Tibial artery (tissue), 4 donors: ENCODE measurements at regions of chr5 and their contacts with region 1.

Region 1: DNA sequence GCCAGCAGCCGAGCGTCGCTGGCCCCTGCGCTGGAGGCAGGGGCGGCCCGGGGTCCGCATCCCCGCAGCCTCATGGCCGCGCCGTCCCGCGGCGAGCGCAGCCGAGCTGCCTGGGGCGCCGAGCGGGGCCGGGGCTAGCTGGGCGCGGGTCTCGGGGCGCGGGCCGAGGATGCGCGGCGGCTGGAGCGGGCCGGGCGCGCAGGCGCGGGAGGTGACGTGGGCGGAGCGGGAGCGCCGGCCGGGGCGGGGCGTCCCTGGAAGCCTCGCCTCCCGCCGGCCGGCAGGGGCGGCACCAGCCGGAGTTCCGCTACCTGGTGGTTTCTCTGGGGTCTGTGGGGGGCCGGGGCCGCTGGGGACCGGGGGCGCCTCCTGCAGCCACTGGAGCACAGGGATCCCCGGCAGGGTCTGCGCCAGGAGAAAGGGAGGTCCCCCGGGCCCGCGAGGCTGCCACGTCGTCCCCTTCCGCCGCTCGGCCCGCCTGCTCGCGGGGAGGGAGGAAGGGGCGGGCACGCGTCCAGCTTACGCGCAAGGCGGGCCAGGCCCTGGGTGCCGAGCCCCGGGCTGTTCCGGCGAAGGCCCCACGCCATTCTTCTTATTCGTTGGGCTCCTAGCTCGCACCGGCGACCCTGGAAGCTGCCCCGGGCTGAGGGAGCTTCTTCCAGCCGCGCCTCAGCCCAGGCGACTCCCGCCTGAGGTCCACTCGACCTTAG is at the start of gene LPCAT1:
- DNase-seq: peak; percentile 54 to 88
- H3K4me3 ChIP-seq: peak within 1 kb of the TSS; percentile 65 to 80
- H3K27ac ChIP-seq: peak within 1 kb of the TSS; percentile 90 to 91
- H3K4me1 ChIP-seq: peaks cover 0 to 26% (median 21%) of the 10 kb centered on the region in 4 donors
- H3K27me3 ChIP-seq: no peaks in the 10 kb centered on the region
- CTCF ChIP-seq: peak; percentile 17 to 26

Region 2: DNA sequence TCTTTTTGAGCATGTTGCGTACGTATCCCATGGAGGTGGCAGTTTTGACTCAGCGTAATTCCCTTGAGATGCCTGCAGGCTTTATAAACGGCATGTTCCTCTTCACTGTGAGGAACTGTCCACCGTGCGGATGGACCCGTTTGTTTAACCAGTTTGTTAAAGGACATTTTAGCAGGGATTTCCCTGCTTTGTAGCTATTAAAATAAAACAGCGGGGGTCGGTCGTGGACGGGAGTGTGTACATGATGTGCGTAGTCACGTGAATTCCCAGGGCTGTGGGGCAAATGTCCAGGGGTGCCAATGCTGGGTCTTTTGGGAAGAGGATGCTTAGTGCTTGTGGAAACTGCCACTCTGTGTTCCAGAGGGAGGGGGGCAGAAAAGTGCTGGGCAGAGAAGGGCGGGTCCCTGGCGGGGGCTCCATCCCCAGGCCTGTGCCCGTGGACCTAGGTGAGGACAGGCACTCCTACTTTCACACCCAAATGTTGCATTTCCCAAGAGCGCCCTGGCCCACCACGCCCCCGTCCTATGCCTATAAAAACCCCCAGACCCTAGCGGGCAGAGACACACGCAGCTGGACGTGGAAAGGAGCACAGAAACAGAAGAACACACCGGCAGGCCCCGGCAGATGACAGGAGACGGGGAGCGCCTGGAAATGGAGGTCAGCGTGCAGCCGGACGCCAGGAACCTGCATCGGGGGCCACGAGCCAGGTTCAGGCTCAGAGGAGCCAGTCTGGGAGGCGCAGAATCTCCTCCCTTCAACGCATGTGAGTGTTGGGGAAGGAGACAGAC is 225.0 kb before region 1 on chr5:
- intact Hi-C with region 1: no loop called
- DNase-seq: no peak
- H3K4me3 ChIP-seq: no peak overlapping the region
- H3K27ac ChIP-seq: no peak overlapping the region
- H3K4me1 ChIP-seq: peaks cover 0 to 13% (median 2%) of the 10 kb centered on the region in 4 donors
- H3K27me3 ChIP-seq: peaks cover 0 to 36% of the 10 kb centered on the region in 2 donors
- CTCF ChIP-seq: no peak

Region 3: GRCh38 chr5:1315709-1316587 is 208.0 kb before region 1 on chr5:
- intact Hi-C with region 1: no loop called
- DNase-seq: peak; percentile 17 to 43
- H3K4me3 ChIP-seq: no peak overlapping the region
- H3K27ac ChIP-seq: no peak overlapping the region
- H3K4me1 ChIP-seq: peaks cover 0 to 7% (median 2%) of the 10 kb centered on the region in 4 donors
- H3K27me3 ChIP-seq: peaks cover 0 to 13% of the 10 kb centered on the region in 2 donors
- CTCF ChIP-seq: no peak

Region 4: DNA sequence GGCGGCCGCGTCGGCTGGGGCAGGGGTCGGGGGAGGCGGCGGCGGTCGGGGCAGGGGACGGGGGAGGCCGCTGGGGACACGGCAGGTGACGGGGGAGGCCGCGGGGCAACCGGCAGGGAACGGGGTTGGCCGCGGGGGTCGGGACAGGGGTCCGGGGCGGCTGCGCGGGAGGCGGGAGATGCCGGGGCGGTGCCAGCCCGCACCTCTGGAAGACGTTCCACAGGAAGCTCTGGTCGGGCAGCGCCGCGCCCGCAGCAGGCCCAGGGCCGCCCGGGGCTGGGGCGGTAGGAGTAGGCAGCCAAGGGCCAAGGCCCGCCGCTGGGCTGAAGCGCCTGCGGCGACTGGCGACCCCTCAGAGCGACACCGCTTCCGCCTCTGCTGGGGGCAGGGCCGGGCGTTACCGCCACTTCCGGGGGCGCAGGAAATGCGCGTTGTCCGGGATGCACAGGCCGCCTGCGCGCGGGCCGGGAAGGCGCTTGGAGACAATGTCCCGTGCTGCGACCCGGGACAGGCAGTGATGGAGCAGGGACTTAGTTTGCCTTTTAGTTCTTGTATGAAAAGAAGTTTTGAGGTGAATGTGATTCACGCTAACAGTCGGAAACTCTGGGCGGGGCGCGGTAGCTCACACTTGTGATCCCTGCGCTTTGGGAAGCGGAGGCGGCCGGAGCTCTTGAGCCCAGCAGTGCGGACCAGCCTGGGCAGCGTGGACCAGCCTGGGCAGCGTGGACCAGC is 109.8 kb after region 1 on chr5:
- intact Hi-C with region 1: loop called (anchors 10 kb)
- DNase-seq: peak; percentile 79 to 88
- H3K4me3 ChIP-seq: peak overlapping the region; percentile 88 to 90
- H3K27ac ChIP-seq: peak overlapping the region; percentile 93 to 95
- H3K4me1 ChIP-seq: peaks cover 0 to 7% (median 3%) of the 10 kb centered on the region in 4 donors
- H3K27me3 ChIP-seq: no peaks in the 10 kb centered on the region
- CTCF ChIP-seq: no peak